CD4-positive, alpha-beta memory T cell (primary cell): ENCODE measurements at regions of chr3 and their contacts with region 1.

Region 1: GRCh38 chr3:172673210-172673679 is 37.6 kb downstream of the NCEH1 start:
- DNase-seq: peak in 4 of 5 donors; percentile 40 to 48 (median 44)
- H3K4me3 ChIP-seq: no peak overlapping the region
- H3K4me3 Mint-ChIP-seq: no peak overlapping the region
- H3K27ac ChIP-seq: no peak overlapping the region
- H3K27ac Mint-ChIP-seq: no peak overlapping the region
- H3K4me1 ChIP-seq: no peaks in the 10 kb centered on the region
- H3K4me1 Mint-ChIP-seq: peaks cover 0 to 5% (median 3%) of the 10 kb centered on the region in 4 donors
- H3K27me3 ChIP-seq: no peaks in the 10 kb centered on the region
- H3K27me3 Mint-ChIP-seq: no peaks in the 10 kb centered on the region

Region 2: DNA sequence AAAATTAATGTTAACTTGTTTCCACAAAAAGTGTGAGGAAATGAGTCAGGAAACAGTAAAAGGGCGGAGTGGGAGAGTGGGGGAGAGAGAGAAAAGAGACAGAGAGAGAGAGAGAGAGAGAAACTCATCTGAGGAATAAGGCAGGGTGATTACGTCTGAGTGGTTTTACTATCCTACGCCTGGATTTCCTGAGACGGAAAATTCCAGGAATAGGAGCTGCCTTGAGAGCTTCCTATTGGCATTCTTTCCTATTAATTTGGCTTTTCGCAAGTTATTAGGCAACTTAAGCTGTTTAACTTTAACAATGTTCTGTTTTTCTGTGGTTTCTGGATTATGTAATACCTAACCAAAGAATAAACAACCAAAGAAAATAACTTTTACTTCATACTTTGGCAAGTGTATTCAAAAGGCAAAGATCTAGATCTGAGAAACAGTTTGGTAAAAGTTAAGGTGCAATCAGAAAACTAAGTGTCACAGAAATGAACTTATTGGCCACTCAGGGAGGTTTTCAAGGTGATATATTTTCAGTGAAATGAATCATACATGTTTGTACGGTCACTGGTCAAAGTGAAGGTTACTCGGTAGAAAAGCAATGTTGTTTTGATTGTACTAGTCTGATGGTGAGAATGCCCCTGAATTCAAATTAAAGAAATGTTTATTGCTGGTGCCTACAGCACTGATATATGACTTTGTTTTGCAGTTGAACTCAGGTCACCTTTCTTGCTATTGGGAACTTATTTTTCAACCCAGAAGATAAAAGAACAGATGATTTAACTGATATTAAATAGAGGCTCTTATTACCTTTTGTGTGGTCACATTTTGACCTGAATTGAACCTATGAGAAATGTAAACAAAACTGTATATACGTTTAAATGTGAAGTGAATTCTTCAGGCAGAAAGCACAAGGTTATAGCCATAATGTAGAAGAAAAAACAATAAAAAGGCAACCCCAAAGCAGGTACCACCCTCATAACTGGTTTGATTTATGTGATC is 110.1 kb before region 1 on chr3:
- CTCF ChIA-PET with region 1: no interaction called
- POLR2A ChIA-PET with region 1: no interaction called
- intact Hi-C with region 1: no loop called
- DNase-seq: peak; percentile 17 to 58 (median 41)
- H3K4me3 ChIP-seq: no peak overlapping the region
- H3K4me3 Mint-ChIP-seq: peak overlapping the region; percentile 74 to 92 (median 90)
- H3K27ac ChIP-seq: peak overlapping the region; percentile 38
- H3K27ac Mint-ChIP-seq: peak overlapping the region; percentile 82 to 98 (median 95)
- H3K4me1 ChIP-seq: peaks cover 27% of the 10 kb centered on the region
- H3K4me1 Mint-ChIP-seq: peaks cover 22 to 30% (median 27%) of the 10 kb centered on the region in 4 donors
- H3K27me3 ChIP-seq: no peaks in the 10 kb centered on the region
- H3K27me3 Mint-ChIP-seq: peaks cover 0 to 1% of the 10 kb centered on the region in 2 donors

Region 3: GRCh38 chr3:172614340-172615274 is 58.6 kb before region 1 on chr3:
- CTCF ChIA-PET with region 1: interaction called, 12 read pairs
- POLR2A ChIA-PET with region 1: no interaction called
- intact Hi-C with region 1: no loop called
- DNase-seq: no peak
- H3K4me3 ChIP-seq: no peak overlapping the region
- H3K4me3 Mint-ChIP-seq: peak overlapping the region in 1 of 8 donors; percentile 34
- H3K27ac ChIP-seq: no peak overlapping the region
- H3K27ac Mint-ChIP-seq: no peak overlapping the region
- H3K4me1 ChIP-seq: peaks cover 18% of the 10 kb centered on the region
- H3K4me1 Mint-ChIP-seq: peaks cover 10 to 24% (median 16%) of the 10 kb centered on the region in 4 donors
- H3K27me3 ChIP-seq: no peaks in the 10 kb centered on the region
- H3K27me3 Mint-ChIP-seq: no peaks in the 10 kb centered on the region

Region 4: DNA sequence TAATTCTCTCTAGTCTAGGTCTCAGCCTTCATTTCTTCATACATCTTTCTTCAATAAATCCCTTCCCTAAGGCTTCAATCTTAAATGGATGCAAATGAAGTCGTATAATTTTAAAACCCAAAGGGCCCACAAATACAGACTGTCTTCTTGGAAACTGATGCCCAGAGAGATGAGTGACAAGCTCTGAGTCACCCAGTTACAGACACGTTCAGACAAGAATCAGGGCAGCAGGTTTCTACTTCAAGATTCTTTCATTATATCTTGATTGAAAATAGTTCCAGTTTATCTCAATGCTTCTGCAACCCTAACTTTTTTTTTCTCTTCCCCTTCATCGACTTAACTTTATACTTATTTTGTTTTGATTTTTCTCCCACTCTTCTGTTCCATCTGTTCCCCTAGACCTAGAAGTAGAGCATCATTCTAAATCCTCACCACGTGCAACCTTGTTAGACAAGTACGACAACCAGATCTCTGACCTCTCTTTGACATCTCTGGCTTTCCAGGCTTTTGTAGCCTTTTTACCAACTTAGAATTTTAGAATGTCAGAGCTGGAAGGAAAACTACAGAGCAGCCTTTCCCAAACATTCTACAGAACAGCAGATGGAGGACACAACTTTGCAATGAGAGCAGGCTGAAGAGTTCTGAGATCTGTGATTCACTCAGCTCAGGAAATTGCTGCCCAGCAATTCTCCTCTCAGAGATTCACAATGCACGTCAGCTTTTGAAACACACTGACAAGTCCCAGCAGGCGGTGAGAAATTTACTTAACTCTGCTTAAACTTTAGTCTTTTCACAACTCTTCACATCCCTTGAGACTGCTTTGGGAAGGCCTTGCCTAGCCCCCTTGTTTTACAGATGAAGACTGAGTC is 12.3 kb after region 1 on chr3:
- CTCF ChIA-PET with region 1: interaction called, 21 read pairs
- POLR2A ChIA-PET with region 1: no interaction called
- intact Hi-C with region 1: no loop called
- DNase-seq: no peak
- H3K4me3 ChIP-seq: no peak overlapping the region
- H3K4me3 Mint-ChIP-seq: no peak overlapping the region
- H3K27ac ChIP-seq: no peak overlapping the region
- H3K27ac Mint-ChIP-seq: no peak overlapping the region
- H3K4me1 ChIP-seq: no peaks in the 10 kb centered on the region
- H3K4me1 Mint-ChIP-seq: peaks cover 0 to 5% (median 2%) of the 10 kb centered on the region in 4 donors
- H3K27me3 ChIP-seq: no peaks in the 10 kb centered on the region
- H3K27me3 Mint-ChIP-seq: peaks cover 0 to 1% of the 10 kb centered on the region in 2 donors

Region 5: DNA sequence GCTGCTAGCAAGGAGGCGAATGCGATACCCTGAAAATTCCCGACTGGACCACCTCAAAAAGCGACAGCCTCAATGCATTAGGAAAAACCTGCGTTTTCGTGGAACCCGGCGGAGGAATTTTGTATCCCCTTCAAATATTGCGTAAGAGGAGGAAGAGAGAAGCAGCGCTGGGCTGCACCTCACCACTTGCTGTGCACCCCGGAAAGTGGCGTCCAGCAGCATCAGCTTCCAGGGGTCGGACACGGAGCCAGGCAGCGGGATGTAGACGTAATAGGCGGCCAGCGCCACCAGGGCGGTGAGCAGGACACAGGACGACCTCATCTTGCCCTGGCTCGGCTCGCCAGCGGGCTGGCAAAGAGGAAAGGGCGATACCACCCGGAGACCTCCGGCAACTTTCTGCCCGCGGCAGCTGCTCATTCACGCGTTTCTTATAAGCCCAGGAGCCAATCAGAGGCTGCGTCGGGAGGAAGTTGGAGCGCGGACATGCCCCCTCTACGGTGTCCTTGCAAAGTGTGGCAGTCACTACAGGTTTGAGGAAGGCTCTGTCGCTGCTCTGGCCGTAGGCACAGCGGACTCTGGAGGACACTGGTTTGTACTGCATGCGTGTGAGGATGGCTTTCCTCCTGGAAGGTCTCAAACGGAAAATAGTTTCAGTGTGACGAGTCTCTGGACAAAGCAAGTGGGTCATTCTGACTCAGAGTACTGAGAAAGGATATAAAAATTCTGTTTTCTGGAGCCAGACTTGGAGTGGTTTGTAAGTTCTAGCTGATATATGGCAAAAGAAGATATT is 37.6 kb after region 1 on chr3 and contains the start of gene NCEH1:
- CTCF ChIA-PET with region 1: interaction called, 18 read pairs
- POLR2A ChIA-PET with region 1: no interaction called
- intact Hi-C with region 1: loop called (anchors 5 kb)
- DNase-seq: peak; percentile 59 to 71 (median 62)
- H3K4me3 ChIP-seq: peak within 1 kb of the TSS; percentile 85 to 96
- H3K4me3 Mint-ChIP-seq: peak within 1 kb of the TSS; percentile 94 to 99 (median 96)
- H3K27ac ChIP-seq: peak within 1 kb of the TSS; percentile 37
- H3K27ac Mint-ChIP-seq: peak within 1 kb of the TSS; percentile 52 to 91 (median 89)
- H3K4me1 ChIP-seq: peaks cover 11% of the 10 kb centered on the region
- H3K4me1 Mint-ChIP-seq: peaks cover 9 to 30% (median 23%) of the 10 kb centered on the region in 4 donors
- H3K27me3 ChIP-seq: no peaks in the 10 kb centered on the region
- H3K27me3 Mint-ChIP-seq: no peaks in the 10 kb centered on the region
- total RNA-seq, gene NCEH1: 3.9 to 5.1 TPM